Right ventricle myocardium inferior (tissue), 1 donor: ENCODE measurements at regions of chr7 and their contacts with region 1.

Region 1: DNA sequence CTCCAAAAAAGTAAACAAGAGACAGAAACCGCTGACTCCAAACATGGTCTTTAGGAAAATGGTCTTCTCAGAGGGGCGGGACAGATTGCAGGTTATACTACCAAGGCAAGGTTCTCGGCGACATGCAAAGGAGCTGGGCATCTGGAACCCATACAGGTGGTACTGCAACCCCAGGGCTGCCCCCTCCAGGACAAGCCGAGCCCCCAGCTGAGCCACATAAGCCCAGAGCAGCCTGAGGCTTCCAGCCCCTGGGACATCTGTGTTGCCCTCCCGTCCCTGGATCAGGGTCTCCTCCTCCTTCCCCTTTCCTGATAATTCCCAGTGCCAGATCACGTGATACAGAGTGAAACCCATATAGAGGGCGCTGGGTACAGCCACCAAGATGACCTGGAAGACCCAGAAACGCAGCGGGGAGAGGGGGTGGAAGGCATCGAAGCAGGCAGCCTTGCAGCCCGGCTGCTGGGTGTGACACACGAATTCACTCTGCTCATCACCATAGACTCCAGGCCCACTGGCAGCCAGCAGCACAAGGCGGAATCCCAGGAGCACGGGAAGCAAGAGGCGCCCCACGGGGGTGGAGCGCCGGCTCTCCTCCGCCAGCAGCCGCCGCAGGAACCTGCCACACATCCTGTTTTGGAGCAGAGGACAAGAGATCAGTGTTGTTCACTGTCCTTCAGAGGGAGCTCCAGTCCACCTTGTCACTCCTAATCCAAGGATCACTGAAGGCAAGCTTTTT is at the start of gene GJC3:
- DNase-seq: peak; percentile 73
- ATAC-seq: peak; percentile 89
- total RNA-seq, gene GJC3: 0.30 TPM

Region 2: DNA sequence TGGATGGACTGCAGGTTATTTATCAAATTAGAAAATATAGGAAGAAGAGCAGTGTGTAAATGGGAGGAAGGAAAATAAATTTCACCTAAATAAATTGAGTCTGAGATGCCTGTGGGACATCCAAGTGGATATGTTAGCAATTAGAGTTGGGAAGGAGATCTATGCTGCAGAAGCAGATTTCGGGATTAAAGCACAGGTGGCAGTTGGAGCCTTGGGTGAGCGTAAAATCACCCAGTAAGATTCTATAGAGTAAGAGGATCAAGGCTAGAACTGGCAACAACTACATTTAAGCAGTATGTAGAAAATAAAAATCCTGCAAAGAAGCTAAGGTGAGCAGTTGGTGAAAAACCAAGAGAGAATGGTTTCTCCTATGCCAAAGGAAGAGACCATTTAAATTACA is 18.2 kb before region 1 on chr7:
- intact Hi-C with region 1: no loop called
- DNase-seq: no peak
- ATAC-seq: no peak

Region 3: DNA sequence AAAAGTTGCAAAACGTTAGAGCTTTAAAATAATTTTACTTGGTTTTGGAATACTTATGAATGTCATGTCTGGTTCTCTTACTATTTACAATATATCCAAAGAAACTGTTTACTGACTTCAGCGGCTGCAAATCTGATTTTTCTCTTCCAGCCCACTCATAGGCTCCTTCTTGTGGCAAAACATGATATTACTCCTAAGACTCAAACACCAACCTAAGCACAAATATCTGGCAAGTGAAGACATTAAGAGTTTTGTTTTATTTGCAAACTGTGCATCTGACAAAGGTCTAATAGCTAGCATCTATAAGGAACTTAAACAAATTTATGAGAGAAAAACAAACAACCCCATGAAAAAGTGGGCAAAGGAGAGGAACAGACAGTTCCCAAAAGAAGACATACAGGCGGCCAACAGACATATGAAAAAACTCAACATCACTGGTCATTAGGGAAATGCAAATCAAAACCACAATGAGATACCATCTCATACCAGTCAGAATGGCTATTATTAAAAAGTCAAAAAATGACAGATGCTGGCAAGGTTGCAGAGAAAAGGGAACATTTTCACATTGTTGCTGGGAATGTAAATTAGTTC is 20.6 kb after region 1 on chr7:
- intact Hi-C with region 1: loop called (anchors 2 kb)
- DNase-seq: no peak
- ATAC-seq: no peak